MCF 10A (cell line): ENCODE measurements at regions of chr4 and their contacts with region 1.

Region 1: GRCh38 chr4:81844717-81845116 is 373.0 kb upstream of the RASGEF1B start:
- DNase-seq: peak; percentile 85
- H3K4me3 Mint-ChIP-seq: no peak overlapping the region
- H3K27ac Mint-ChIP-seq: no peak overlapping the region
- H3K4me1 Mint-ChIP-seq: peaks cover 5% of the 10 kb centered on the region
- H3K27me3 Mint-ChIP-seq: no peaks in the 10 kb centered on the region
- CTCF ChIP-seq: peak; percentile 78

Region 2: GRCh38 chr4:81631958-81632441 is 212.7 kb before region 1 on chr4:
- CTCF ChIA-PET with region 1: no interaction called
- POLR2A ChIA-PET with region 1: no interaction called
- intact Hi-C with region 1: loop called (anchors 2 kb)
- DNase-seq: peak; percentile 93
- H3K4me3 Mint-ChIP-seq: peak overlapping the region; percentile 14
- H3K27ac Mint-ChIP-seq: peak overlapping the region; percentile 91
- H3K4me1 Mint-ChIP-seq: peaks cover 20% of the 10 kb centered on the region
- H3K27me3 Mint-ChIP-seq: no peaks in the 10 kb centered on the region
- CTCF ChIP-seq: no peak

Region 3: GRCh38 chr4:81688085-81688484 is 156.6 kb before region 1 on chr4:
- CTCF ChIA-PET with region 1: interaction called, 4 read pairs
- POLR2A ChIA-PET with region 1: no interaction called
- intact Hi-C with region 1: loop called (anchors 5 kb)
- DNase-seq: peak; percentile 7
- H3K4me3 Mint-ChIP-seq: no peak overlapping the region
- H3K27ac Mint-ChIP-seq: no peak overlapping the region
- H3K4me1 Mint-ChIP-seq: no peaks in the 10 kb centered on the region
- H3K27me3 Mint-ChIP-seq: no peaks in the 10 kb centered on the region
- CTCF ChIP-seq: no peak

Region 4: GRCh38 chr4:82005158-82005557 is 160.4 kb after region 1 on chr4:
- CTCF ChIA-PET with region 1: no interaction called
- POLR2A ChIA-PET with region 1: no interaction called
- intact Hi-C with region 1: no loop called
- DNase-seq: no peak
- H3K4me3 Mint-ChIP-seq: no peak overlapping the region
- H3K27ac Mint-ChIP-seq: no peak overlapping the region
- H3K4me1 Mint-ChIP-seq: no peaks in the 10 kb centered on the region
- H3K27me3 Mint-ChIP-seq: no peaks in the 10 kb centered on the region
- CTCF ChIP-seq: no peak

Region 5: GRCh38 chr4:82201805-82202641 is 357.3 kb after region 1 on chr4:
- CTCF ChIA-PET with region 1: interaction called, 4 read pairs
- POLR2A ChIA-PET with region 1: no interaction called
- intact Hi-C with region 1: loop called (anchors 1 kb)
- DNase-seq: peak; percentile 69
- H3K4me3 Mint-ChIP-seq: no peak overlapping the region
- H3K27ac Mint-ChIP-seq: no peak overlapping the region
- H3K4me1 Mint-ChIP-seq: peaks cover 5% of the 10 kb centered on the region
- H3K27me3 Mint-ChIP-seq: no peaks in the 10 kb centered on the region
- CTCF ChIP-seq: peak; percentile 74

Region 6: GRCh38 chr4:82248903-82249632 is 404.4 kb after region 1 on chr4:
- CTCF ChIA-PET with region 1: interaction called, 3 read pairs
- POLR2A ChIA-PET with region 1: no interaction called
- intact Hi-C with region 1: loop called (anchors 1 kb)
- DNase-seq: peak; percentile 13
- H3K4me3 Mint-ChIP-seq: no peak overlapping the region
- H3K27ac Mint-ChIP-seq: no peak overlapping the region
- H3K4me1 Mint-ChIP-seq: peaks cover 14% of the 10 kb centered on the region
- H3K27me3 Mint-ChIP-seq: no peaks in the 10 kb centered on the region
- CTCF ChIP-seq: no peak

Region 7: GRCh38 chr4:82578935-82579334 is 734.2 kb after region 1 on chr4:
- CTCF ChIA-PET with region 1: no interaction called
- POLR2A ChIA-PET with region 1: no interaction called
- intact Hi-C with region 1: no loop called
- DNase-seq: no peak
- H3K4me3 Mint-ChIP-seq: no peak overlapping the region
- H3K27ac Mint-ChIP-seq: no peak overlapping the region
- H3K4me1 Mint-ChIP-seq: no peaks in the 10 kb centered on the region
- H3K27me3 Mint-ChIP-seq: no peaks in the 10 kb centered on the region
- CTCF ChIP-seq: peak; percentile 7